Mucosa of descending colon (tissue), 3 donors: ENCODE measurements at regions of chr20 and their contacts with region 1.

Region 1: DNA sequence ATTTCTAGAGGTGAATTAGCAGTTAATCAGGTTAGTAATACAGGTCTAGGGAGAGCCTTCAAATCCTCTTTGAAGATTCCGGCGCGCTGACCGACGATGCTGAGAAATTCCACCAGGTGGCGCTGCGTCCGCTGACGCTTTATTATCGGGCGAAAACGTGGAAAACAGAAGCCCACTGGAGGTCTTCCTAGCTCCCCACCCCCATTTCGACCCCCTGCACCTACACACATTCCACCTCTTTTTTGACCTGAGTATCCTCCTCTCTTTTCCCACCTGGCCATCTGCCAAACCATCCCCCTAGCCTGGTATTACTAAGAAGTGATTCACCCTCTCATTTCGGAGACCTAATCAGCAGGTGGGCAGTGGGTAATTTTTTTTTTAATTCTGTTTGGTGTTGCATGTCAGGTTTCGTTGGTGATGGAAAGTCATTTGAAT is 65.4 kb upstream of the RIN2 start:
- DNase-seq: peak in 2 of 3 donors; percentile 77 to 83
- ATAC-seq: peak; percentile 67
- H3K4me3 ChIP-seq: no peak overlapping the region
- H3K4me1 ChIP-seq: no peaks in the 10 kb centered on the region
- CTCF ChIP-seq: peak; percentile 87

Region 2: GRCh38 chr20:19644085-19644484 is 48.6 kb before region 1 on chr20:
- intact Hi-C with region 1: no loop called
- DNase-seq: no peak
- ATAC-seq: no peak
- H3K4me3 ChIP-seq: no peak overlapping the region
- H3K4me1 ChIP-seq: no peaks in the 10 kb centered on the region
- CTCF ChIP-seq: no peak

Region 3: DNA sequence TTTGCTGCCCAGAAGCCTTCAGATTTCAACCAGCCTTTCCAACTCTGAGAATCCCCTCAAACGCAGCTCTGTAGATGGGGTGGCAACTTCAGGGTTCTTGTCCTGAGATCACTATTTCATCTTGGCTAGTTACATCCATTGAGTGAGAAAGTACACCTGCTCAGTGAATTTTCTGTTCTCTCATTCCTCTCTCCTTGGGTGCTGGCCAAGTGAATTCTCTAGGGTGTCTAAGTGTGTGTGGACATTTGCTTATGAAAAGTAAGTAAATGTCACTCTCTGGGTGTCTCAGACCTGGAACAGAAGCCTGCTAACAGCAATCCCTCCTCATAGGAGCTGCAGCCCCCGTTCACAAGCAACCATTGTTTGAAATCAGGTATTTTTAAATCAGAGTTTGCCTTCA is 69.1 kb after region 1 on chr20:
- intact Hi-C with region 1: loop called in 1 of 2 experiments (anchors 10 kb)
- DNase-seq: no peak
- ATAC-seq: no peak
- H3K4me3 ChIP-seq: no peak overlapping the region
- H3K4me1 ChIP-seq: peaks cover 2% of the 10 kb centered on the region
- CTCF ChIP-seq: no peak